ENCODE measurements at regions of chr1 and their contacts with region 1.

Region 1: GRCh38 chr1:52552505-52553361 is at the start of gene TUT4:
- DNase-seq: peak; percentile 69
- H3K4me3 Mint-ChIP-seq: peak within 1 kb of the TSS; percentile 49
- H3K27ac Mint-ChIP-seq: peak within 1 kb of the TSS; percentile 86
- H3K4me1 Mint-ChIP-seq: peaks cover 36% of the 10 kb centered on the region
- H3K27me3 Mint-ChIP-seq: peaks cover 3% of the 10 kb centered on the region
- total RNA-seq, gene TUT4: 62.5 and 67.8 TPM in 2 replicates

Region 2: DNA sequence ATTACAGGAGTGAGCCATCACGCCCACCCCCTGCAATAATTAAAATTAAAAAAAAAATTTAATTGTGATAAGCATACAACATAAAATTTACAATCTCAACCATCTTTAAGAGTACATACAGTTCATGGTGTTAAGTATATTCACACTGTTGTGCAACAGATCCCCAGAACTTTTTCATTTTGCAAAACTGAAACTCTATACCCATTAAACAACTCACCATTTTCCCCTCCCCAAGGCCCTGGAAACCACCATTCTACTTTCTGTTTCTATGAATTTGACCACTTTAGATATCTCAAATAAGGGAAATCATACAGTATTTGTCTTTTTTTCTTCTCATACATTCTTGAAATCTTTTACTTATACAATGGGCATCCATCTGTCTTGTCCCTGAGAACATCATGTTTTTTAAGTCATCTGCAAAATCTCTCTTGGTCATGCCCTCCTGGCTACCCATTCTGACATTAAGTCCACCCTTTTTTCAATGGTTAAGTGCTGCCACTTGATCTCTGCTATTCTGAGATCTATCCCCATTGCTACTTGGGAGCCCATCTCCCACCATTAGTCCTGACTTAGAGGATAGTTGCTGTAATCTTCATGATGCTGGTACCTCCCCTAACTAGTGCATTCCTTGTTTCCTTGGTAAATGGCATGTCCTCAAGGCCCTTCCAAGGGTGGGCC is 450.3 kb before region 1 on chr1:
- intact Hi-C with region 1: no loop called
- DNase-seq: no peak
- H3K4me3 Mint-ChIP-seq: no peak overlapping the region
- H3K27ac Mint-ChIP-seq: no peak overlapping the region
- H3K4me1 Mint-ChIP-seq: peaks cover 14% of the 10 kb centered on the region
- H3K27me3 Mint-ChIP-seq: peaks cover 5% of the 10 kb centered on the region

Region 3: GRCh38 chr1:52281518-52281917 is 271.2 kb before region 1 on chr1:
- intact Hi-C with region 1: no loop called
- DNase-seq: no peak
- H3K4me3 Mint-ChIP-seq: no peak overlapping the region
- H3K27ac Mint-ChIP-seq: no peak overlapping the region
- H3K4me1 Mint-ChIP-seq: no peaks in the 10 kb centered on the region
- H3K27me3 Mint-ChIP-seq: no peaks in the 10 kb centered on the region

Region 4: DNA sequence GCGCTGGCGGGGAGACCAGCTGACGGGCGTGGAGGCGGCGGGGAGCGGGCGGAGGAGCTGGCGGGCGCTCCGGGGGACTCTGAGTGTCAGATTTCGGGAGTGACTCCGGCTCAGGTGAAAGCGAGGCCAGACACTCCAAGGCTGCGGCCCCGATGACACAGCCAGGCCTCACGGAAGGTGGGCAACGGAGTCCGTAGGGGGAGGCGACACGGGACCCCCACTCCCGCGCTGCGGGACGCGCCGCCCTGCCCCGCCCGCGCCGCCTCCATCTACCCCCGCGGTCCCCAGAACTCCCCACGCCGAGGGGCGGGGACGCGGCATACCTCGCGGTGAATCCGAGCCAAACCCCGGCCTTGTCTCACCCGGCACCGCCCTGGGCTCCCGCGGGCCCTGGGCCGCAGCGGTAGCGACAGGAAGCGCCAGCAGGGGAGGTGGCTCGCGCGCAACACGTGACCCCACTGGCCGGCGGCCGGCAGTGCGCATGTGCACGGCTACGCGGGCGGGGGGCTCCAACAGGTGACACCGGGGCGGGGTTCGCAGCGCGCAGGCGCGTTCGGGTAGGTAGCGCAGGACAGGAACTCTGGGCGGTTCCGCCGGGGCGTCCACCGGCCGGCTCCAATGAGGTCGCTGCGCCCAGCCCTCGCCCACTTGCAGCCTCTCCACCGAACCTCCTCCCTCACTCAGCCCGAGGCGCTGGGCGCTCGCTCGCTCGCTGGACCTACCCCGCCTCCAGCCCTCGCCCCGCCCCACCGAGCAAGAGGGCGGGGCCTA is 186.8 kb before region 1 on chr1 and contains the start of gene CC2D1B:
- intact Hi-C with region 1: loop called (anchors 1 kb)
- DNase-seq: peak; percentile 100
- H3K4me3 Mint-ChIP-seq: peak within 1 kb of the TSS; percentile 90
- H3K27ac Mint-ChIP-seq: peak within 1 kb of the TSS; percentile 84
- H3K4me1 Mint-ChIP-seq: peaks cover 55% of the 10 kb centered on the region
- H3K27me3 Mint-ChIP-seq: no peaks in the 10 kb centered on the region
- total RNA-seq, gene CC2D1B: 40.5 and 42.3 TPM in 2 replicates

Region 5: GRCh38 chr1:52511851-52512615 is 40.7 kb before region 1 on chr1:
- intact Hi-C with region 1: loop called (anchors 5 kb)
- DNase-seq: no peak
- H3K4me3 Mint-ChIP-seq: no peak overlapping the region
- H3K27ac Mint-ChIP-seq: no peak overlapping the region
- H3K4me1 Mint-ChIP-seq: peaks cover 5% of the 10 kb centered on the region
- H3K27me3 Mint-ChIP-seq: no peaks in the 10 kb centered on the region

Region 6: GRCh38 chr1:52530563-52531144 is 22.1 kb before region 1 on chr1:
- intact Hi-C with region 1: no loop called
- DNase-seq: no peak
- H3K4me3 Mint-ChIP-seq: no peak overlapping the region
- H3K27ac Mint-ChIP-seq: no peak overlapping the region
- H3K4me1 Mint-ChIP-seq: peaks cover 19% of the 10 kb centered on the region
- H3K27me3 Mint-ChIP-seq: no peaks in the 10 kb centered on the region

Region 7: GRCh38 chr1:52636721-52637695 is 84.3 kb after region 1 on chr1:
- intact Hi-C with region 1: loop called (anchors 1 kb)
- DNase-seq: peak; percentile 78
- H3K4me3 Mint-ChIP-seq: peak overlapping the region; percentile 77
- H3K27ac Mint-ChIP-seq: peak overlapping the region; percentile 99
- H3K4me1 Mint-ChIP-seq: peaks cover 68% of the 10 kb centered on the region
- H3K27me3 Mint-ChIP-seq: peaks cover 2% of the 10 kb centered on the region

Region 8: GRCh38 chr1:52702886-52703787 is 150.4 kb after region 1 on chr1:
- intact Hi-C with region 1: loop called (anchors 1 kb)
- DNase-seq: peak; percentile 80
- H3K4me3 Mint-ChIP-seq: peak overlapping the region; percentile 82
- H3K27ac Mint-ChIP-seq: peak overlapping the region; percentile 88
- H3K4me1 Mint-ChIP-seq: peaks cover 32% of the 10 kb centered on the region
- H3K27me3 Mint-ChIP-seq: peaks cover 4% of the 10 kb centered on the region

Region 9: GRCh38 chr1:52769346-52770033 is 216.8 kb after region 1 on chr1:
- intact Hi-C with region 1: no loop called
- DNase-seq: no peak
- H3K4me3 Mint-ChIP-seq: no peak overlapping the region
- H3K27ac Mint-ChIP-seq: no peak overlapping the region
- H3K4me1 Mint-ChIP-seq: no peaks in the 10 kb centered on the region
- H3K27me3 Mint-ChIP-seq: no peaks in the 10 kb centered on the region

Region 10: DNA sequence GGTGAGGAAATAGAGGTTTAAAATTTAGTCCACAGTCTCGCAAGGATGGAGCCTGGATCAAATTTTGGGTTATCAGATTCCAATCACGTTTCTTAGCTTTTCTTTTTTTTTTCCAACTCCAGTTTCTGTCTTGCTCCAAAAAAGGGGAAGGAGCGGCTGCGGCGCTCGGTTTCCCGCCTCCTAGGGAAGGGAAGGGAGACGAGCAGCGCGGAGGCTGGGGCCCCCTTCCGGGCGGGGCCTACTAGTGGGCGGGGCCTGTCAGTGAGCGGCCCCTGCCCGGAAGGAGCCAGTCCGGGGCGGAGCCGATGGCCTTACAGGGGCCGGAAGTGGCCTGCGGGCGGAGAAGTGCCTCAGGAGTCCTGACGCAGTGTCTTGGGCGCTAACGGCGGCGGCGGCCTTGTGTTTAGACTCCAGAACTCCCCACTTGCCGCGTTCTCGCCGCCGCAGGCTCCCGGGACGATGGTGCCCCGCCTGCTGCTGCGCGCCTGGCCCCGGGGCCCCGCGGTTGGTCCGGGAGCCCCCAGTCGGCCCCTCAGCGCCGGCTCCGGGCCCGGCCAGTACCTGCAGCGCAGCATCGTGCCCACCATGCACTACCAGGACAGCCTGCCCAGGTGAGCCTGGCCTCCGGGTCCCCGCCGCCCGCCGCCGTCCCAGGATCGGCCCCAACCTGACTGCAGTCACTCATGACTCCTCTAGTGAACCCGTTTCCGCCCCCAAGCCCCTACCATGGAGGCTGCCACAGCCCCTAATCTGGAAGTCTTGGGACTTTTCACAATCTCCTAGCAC is 643.9 kb after region 1 on chr1 and contains the start of gene CPT2:
- intact Hi-C with region 1: loop called (anchors 2 kb)
- DNase-seq: peak; percentile 92
- H3K4me3 Mint-ChIP-seq: peak within 1 kb of the TSS; percentile 95
- H3K27ac Mint-ChIP-seq: peak within 1 kb of the TSS; percentile 92
- H3K4me1 Mint-ChIP-seq: peaks cover 28% of the 10 kb centered on the region
- H3K27me3 Mint-ChIP-seq: no peaks in the 10 kb centered on the region
- total RNA-seq, gene CPT2: 18.5 and 19.4 TPM in 2 replicates